ENCODE measurements at regions of chr6 and their contacts with region 1.

Region 1: GRCh38 chr6:75296811-75297779 is 12.5 kb upstream of the TMEM30A start:
- DNase-seq: no peak
- H3K4me3 Mint-ChIP-seq: no peak overlapping the region
- H3K27ac Mint-ChIP-seq: no peak overlapping the region
- H3K4me1 Mint-ChIP-seq: no peaks in the 10 kb centered on the region
- H3K27me3 Mint-ChIP-seq: no peaks in the 10 kb centered on the region

Region 2: DNA sequence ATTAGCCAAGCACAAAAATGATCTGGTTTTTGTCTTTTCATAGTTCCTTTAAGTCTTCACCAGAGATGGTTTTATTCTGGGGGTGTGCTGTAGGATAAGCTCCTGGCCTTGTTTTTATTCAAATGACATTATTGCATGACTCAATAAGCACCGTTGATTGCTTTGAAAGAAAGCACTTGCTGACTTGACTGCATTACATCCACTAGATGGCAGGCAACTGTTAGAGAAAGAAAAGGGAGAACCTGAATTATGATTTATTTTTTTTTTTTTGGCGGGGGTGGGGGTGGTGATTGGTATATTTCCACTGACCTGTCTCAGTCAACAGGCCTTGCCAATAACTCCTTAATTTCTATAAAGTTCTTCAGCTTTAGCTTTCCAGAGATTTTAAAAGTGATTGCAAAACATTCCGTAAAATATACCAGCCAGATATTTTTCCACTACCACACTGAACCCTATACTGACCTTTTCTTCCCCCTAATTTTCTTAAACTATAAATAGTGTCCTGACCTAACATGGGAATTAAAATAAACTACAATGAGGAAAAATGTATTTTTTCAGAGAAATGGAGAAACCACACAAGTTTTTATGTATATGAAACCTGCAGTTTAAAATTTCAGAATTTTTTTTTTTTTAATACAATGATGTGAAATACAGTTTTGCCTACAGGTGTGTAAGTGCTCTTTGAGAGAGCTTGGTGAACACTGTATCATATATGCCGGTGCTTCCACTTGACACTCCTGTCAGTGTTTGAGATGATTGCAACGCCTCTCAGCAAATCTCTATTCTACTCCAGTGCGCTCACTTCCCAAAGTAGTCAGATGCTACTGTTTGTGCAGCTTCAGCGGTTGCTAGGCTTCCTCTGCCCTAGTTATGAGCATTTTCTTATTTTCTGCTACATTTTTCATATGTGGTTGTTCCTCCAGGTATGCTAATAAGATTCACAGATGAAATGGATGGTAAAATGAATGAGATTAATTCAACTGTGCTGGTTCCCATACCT is 1326.8 kb before region 1 on chr6:
- CTCF ChIA-PET with region 1: no interaction called
- POLR2A ChIA-PET with region 1: no interaction called
- intact Hi-C with region 1: no loop called
- DNase-seq: no peak
- H3K4me3 Mint-ChIP-seq: no peak overlapping the region
- H3K27ac Mint-ChIP-seq: no peak overlapping the region
- H3K4me1 Mint-ChIP-seq: no peaks in the 10 kb centered on the region
- H3K27me3 Mint-ChIP-seq: peaks cover 1% of the 10 kb centered on the region

Region 3: GRCh38 chr6:75266716-75267291 is 30.3 kb before region 1 on chr6:
- CTCF ChIA-PET with region 1: interaction called, 17 read pairs
- POLR2A ChIA-PET with region 1: no interaction called
- intact Hi-C with region 1: loop called (anchors 1 kb)
- DNase-seq: no peak
- H3K4me3 Mint-ChIP-seq: no peak overlapping the region
- H3K27ac Mint-ChIP-seq: no peak overlapping the region
- H3K4me1 Mint-ChIP-seq: peaks cover 38% of the 10 kb centered on the region
- H3K27me3 Mint-ChIP-seq: no peaks in the 10 kb centered on the region

Region 4: GRCh38 chr6:75386053-75386770 is 89.1 kb after region 1 on chr6:
- CTCF ChIA-PET with region 1: no interaction called
- POLR2A ChIA-PET with region 1: no interaction called
- intact Hi-C with region 1: no loop called
- DNase-seq: no peak
- H3K4me3 Mint-ChIP-seq: no peak overlapping the region
- H3K27ac Mint-ChIP-seq: no peak overlapping the region
- H3K4me1 Mint-ChIP-seq: no peaks in the 10 kb centered on the region
- H3K27me3 Mint-ChIP-seq: peaks cover 16% of the 10 kb centered on the region

Region 5: DNA sequence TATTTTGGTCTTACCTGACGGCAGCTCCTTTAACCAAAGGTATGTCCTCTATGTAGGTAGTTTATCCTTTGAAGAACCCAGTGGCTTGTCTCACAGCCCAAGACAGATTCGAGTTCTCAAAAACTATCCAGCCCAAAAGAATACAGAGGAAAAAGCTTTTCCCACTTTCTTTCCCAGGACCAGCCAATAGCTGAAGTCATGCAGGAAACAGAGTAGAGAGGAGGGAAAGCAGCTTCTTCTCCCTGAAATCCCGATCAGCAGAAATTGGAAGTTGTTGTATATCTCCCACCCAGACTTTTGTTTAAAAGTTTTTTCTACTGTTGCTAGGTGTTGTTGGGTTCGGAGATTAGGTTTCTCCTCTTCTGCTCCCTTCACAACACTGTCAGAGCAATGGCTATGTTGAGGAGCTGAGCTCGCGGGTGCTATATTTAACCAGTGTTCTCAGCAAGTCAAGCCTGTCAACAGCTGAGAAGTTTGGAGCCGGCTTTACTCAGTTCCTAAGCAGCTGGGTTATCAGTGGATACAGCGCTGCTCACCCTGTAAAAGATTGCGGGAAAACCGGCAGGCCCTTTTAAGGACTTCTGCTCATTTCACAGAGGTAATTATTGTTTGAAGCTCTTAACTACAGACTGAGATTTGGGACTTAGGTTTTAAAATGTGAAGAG is 196.4 kb after region 1 on chr6 and contains the start of gene FILIP1:
- CTCF ChIA-PET with region 1: interaction called, 3 read pairs
- POLR2A ChIA-PET with region 1: no interaction called
- intact Hi-C with region 1: loop called (anchors 1 kb)
- DNase-seq: no peak
- H3K4me3 Mint-ChIP-seq: no peak within 1 kb of the TSS
- H3K27ac Mint-ChIP-seq: no peak within 1 kb of the TSS
- H3K4me1 Mint-ChIP-seq: peaks cover 11% of the 10 kb centered on the region
- H3K27me3 Mint-ChIP-seq: peaks cover 23% of the 10 kb centered on the region
- total RNA-seq, gene FILIP1: not detected